Calu3 (cell line): ENCODE measurements at regions of chr5 and their contacts with region 1.

Region 1: DNA sequence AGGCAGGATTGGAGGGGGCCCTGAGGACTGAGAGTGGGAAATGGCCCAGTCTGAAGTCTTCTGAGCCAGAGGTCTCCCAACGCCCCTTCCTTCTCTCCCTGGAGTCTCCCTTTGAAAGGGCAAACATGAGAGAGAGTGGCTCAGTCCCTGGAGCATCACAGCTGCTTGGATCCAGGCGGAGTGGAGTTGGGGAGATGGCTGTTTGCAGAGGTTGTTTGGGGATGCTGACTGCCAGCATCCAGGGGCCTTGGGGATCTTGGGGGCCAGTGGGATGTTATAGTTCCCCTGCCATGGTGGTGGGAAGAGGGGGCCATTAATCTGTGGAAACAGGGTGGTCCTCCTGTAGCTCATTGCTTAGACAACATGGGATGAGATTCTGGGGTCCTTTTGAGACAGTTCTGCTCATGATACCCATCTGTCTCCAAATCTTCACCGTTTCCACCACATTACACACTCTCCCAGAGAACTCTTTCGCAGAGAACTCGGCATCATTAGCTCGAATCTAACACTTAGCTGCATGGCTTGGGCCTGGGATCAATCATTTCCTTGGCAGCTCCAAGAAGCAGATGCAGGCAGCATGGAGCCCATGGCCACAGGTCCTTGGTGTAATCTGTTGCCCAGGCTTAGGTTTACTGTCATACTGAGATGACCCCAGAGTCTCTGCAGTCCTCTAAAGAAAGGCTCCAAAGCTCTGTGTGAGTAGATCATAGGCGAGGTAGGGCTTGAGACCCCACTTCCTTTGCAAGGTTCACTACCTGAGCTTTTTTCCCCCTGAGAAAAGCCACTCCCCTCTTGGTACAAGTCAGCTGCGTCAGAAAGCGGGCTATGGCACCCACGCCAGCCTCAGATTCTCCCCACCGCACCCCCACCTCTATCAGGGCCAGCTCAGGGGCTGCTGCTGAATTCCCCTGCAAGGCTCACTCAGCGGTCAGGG is 54.4 kb upstream of the SH3PXD2B start:
- DNase-seq: no peak
- H3K4me3 Mint-ChIP-seq: no peak overlapping the region
- H3K27ac Mint-ChIP-seq: no peak overlapping the region
- H3K4me1 Mint-ChIP-seq: peaks cover 8% of the 10 kb centered on the region
- H3K27me3 Mint-ChIP-seq: peaks cover 100% of the 10 kb centered on the region
- CTCF ChIP-seq: no peak

Region 2: GRCh38 chr5:172498431-172499129 is 10.2 kb before region 1 on chr5:
- CTCF ChIA-PET with region 1: interaction called, 10 read pairs
- intact Hi-C with region 1: no loop called
- DNase-seq: no peak
- H3K4me3 Mint-ChIP-seq: no peak overlapping the region
- H3K27ac Mint-ChIP-seq: no peak overlapping the region
- H3K4me1 Mint-ChIP-seq: no peaks in the 10 kb centered on the region
- H3K27me3 Mint-ChIP-seq: peaks cover 95% of the 10 kb centered on the region
- CTCF ChIP-seq: no peak

Region 3: DNA sequence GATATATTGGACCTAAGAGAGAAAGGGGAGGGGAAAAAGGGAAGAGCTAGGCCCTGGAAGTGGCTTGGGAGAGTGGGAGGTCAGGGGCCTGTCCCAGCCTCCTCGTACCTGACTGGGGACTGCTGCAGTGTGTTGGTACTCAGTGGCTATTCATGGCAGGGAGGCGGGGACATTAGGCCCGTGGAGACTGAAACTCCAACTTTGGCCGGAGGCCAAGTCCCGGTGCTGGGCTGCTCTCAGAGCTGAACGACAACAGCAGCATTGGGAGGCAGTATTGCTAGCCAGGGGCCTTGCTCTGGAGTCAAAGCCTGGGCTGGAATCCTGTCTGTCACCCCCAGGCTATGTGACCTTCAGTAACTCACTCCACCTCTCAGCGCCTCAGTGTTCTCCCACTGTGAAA is 170.2 kb after region 1 on chr5:
- CTCF ChIA-PET with region 1: no interaction called
- intact Hi-C with region 1: no loop called
- DNase-seq: no peak
- H3K4me3 Mint-ChIP-seq: no peak overlapping the region
- H3K27ac Mint-ChIP-seq: no peak overlapping the region
- H3K4me1 Mint-ChIP-seq: peaks cover 7% of the 10 kb centered on the region
- H3K27me3 Mint-ChIP-seq: peaks cover 19% of the 10 kb centered on the region
- CTCF ChIP-seq: no peak

Region 4: DNA sequence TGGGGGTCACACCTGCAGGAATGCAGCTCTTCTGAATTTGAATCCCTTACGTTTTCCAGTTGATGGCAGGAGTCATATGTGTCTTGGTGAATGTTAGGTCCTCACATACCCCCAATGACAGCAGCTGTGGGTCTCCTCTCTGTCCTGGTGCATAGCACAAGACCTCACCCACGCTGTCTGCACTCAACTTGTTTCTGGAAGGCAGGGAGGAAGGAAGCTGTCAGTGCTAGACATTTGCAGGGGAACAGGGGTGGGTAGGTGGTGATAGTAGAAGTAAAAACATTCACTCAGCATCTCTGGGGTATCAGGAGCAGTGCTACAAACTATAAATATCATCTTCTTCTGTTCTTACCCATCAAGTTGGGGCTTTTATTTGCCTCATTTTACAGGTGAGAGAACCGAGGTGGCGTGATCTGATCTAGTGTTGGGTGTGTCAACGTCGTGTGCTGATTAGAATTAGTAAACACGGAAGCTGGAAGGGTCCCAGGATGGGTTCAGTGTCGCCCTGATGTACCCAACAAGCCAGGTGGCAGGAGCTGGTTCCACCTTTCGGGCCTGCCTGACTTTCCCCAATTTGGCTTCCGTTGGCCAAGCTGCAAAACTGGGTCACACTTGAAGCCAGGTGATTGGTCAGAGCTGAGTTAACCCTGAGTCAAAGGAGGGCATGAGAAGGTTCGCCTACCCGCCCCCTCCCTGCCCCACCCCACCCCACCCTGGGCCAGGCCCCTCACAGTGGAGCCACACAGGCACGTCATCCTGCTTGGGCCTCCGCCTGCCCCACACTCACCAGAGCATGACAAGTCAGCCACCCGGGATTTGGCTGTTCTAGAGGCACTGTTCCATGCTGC is 341.1 kb after region 1 on chr5:
- CTCF ChIA-PET with region 1: no interaction called
- intact Hi-C with region 1: no loop called
- DNase-seq: peak; percentile 30
- H3K4me3 Mint-ChIP-seq: no peak overlapping the region
- H3K27ac Mint-ChIP-seq: peak overlapping the region; percentile 52
- H3K4me1 Mint-ChIP-seq: peaks cover 39% of the 10 kb centered on the region
- H3K27me3 Mint-ChIP-seq: no peaks in the 10 kb centered on the region
- CTCF ChIP-seq: no peak